Activated CD4-positive, alpha-beta memory T cell treated with anti-CD3 and anti-CD28 coated beads for 36 hours (primary cell): ENCODE measurements at regions of chr19 and their contacts with region 1.

Region 1: DNA sequence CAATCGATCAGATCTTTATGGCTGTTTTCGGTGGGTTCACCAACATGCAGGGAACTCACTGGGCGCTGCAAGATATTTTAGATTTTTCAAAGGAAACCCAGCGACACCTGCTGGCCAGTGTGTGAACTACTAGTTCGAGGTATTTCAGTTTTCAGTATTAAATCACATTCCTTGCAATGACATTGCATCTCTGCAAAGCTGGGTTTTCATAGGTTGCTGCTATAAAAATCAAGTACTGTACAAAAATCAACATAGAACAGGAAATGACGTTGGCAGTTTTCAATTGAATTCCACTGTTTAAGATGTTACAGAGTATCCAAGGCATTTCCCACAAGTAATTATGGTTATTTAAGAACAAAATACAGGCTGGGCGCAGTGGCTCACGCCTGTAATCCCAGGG is 17.6 kb downstream of the LIG1 start:
- DNase-seq: peak; percentile 74
- H3K4me3 Mint-ChIP-seq: no peak overlapping the region
- H3K27ac Mint-ChIP-seq: no peak overlapping the region
- H3K4me1 Mint-ChIP-seq: no peaks in the 10 kb centered on the region
- H3K27me3 Mint-ChIP-seq: no peaks in the 10 kb centered on the region

Region 2: DNA sequence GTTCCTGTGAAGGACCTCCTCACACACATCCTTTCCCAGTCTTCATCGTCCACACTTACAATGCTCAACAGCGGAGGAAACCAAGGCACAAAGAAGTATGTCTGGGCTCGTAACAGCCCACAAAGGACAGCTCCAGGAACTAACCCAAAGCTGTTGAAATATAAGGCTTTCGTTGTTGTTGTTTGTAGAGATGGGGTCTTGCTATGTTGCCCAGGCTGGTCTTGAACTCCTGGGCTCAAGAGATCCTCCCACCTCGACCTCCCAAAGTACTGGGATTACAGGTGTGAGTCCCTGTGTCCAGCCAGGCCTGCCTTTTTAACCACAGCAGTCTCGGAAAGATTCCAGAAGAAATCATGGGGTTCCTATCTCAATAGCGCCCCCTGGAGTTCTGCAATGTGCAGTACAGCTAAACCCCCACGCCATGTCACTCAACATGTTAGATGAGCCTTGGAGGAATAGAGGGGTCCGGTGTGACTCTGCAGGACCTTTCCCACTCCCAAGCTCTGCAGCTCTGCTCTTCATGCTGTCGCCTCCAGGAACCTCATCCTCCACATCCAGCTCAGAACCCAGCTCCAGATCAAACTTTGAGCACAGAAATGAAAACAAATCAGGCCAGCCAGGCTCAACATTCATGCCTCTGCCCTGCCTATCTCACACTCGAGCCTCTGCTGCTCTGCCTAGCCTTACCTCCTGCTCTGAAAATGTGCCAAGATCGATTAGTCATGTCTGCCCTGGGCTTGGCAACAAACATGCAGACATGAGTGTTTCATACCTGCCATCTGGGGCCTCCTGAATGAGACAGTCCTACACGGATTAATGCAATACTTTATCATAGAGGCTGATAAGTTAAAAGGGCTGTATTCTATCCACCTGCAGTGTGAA is 49.4 kb before region 1 on chr19:
- CTCF ChIA-PET with region 1: interaction called, 59 read pairs
- POLR2A ChIA-PET with region 1: no interaction called
- intact Hi-C with region 1: loop called (anchors 2 kb)
- DNase-seq: peak; percentile 49
- H3K4me3 Mint-ChIP-seq: no peak overlapping the region
- H3K27ac Mint-ChIP-seq: no peak overlapping the region
- H3K4me1 Mint-ChIP-seq: peaks cover 2% of the 10 kb centered on the region
- H3K27me3 Mint-ChIP-seq: no peaks in the 10 kb centered on the region

Region 3: GRCh38 chr19:48110350-48110966 is 42.1 kb before region 1 on chr19 and contains the start of gene PLA2G4C:
- CTCF ChIA-PET with region 1: interaction called, 59 read pairs
- POLR2A ChIA-PET with region 1: no interaction called
- intact Hi-C with region 1: loop called (anchors 2 kb)
- DNase-seq: peak; percentile 89
- H3K4me3 Mint-ChIP-seq: peak within 1 kb of the TSS; percentile 82
- H3K27ac Mint-ChIP-seq: peak within 1 kb of the TSS; percentile 91
- H3K4me1 Mint-ChIP-seq: peaks cover 14% of the 10 kb centered on the region
- H3K27me3 Mint-ChIP-seq: no peaks in the 10 kb centered on the region
- total RNA-seq, gene PLA2G4C: 12.4 to 13.3 TPM